ENCODE measurements at regions of chr13 and their contacts with region 1.

Region 1: DNA sequence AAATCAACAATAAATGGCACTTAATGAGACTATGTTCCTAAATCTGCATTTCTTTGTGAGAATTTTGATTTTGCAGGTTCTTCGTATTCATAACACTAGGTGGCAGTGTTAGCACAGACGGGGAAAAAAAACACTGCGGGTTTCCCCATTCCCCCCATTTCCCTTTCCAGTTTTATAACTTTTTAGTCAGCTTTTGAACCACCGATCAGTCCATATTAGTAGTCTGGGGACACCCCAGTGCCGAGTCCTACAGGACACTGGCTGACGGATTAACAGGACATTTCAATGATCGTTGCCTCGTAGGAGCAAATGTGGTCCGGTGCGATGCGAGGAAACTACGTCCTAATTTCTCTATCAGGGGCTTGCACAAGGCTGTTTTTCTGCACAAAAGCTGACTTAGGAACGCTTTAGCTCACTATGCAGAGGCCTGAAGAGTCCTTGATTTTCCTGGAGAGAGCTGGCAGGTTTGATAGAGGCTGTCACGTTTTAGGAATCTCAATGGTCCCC is 234.3 kb downstream of the LMO7 start:
- DNase-seq: no peak
- H3K4me3 ChIP-seq: peak overlapping the region; percentile 11
- H3K27ac ChIP-seq: no peak overlapping the region
- H3K4me1 ChIP-seq: no peaks in the 10 kb centered on the region
- H3K27me3 ChIP-seq: no peaks in the 10 kb centered on the region
- CTCF ChIP-seq: peak; percentile 64

Region 2: DNA sequence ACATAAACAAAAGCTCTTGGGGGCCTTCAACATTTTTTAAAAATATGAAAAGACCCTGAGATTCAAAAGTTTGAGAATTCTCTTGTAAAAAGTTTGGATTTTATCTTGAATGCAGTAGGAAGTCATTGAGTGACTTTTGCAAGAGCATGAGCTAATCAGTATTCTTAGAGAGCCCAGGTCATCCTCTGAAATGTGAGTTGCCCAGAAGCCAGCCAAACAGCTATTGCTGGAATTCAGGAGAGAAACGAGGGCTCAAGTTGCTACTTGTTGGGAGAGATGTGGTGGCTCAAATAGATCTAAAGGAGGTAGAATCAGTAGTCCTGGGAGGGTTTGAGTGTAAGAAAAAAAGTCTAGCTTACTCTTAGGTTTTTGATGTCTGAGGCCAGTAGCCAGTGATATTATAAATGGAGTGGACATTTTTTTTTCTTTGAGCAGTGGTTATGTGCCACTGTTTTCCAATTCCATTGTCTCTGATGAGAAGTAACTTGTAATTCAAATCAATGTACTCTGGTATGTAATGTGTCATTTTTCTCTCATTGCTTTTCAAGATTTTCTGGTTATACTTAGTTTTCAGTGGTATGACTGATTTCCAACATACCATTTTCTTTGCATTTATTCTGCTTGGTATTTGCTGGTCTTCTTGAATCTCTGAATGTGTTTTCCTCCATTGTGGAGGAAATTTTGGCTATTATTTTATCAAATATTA is 203.7 kb before region 1 on chr13:
- intact Hi-C with region 1: no loop called
- DNase-seq: no peak
- H3K4me3 ChIP-seq: no peak overlapping the region
- H3K27ac ChIP-seq: no peak overlapping the region
- H3K4me1 ChIP-seq: no peaks in the 10 kb centered on the region
- H3K27me3 ChIP-seq: no peaks in the 10 kb centered on the region
- CTCF ChIP-seq: no peak

Region 3: GRCh38 chr13:75694722-75695121 is 175.7 kb before region 1 on chr13:
- intact Hi-C with region 1: loop called (anchors 5 kb)
- DNase-seq: no peak
- H3K4me3 ChIP-seq: no peak overlapping the region
- H3K27ac ChIP-seq: no peak overlapping the region
- H3K4me1 ChIP-seq: no peaks in the 10 kb centered on the region
- H3K27me3 ChIP-seq: no peaks in the 10 kb centered on the region
- CTCF ChIP-seq: no peak

Region 4: DNA sequence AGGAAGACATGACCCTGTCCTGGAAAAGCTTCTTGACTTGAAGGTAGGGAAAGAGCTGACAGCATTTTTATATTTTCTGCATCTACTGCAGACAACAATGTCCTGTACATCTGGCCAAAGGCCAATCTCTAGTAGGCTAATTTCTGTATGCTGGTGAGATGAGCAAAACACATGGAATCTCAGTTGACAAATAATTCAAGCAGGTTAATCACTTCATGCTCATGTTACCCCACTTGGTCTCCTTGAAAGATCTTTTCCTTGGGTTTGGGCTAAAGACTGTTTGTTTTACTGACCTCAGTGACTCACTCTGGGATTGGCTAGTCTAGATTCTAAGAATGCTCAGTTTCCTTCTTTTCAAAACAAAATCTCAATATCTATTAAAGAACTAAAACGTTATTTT is 64.4 kb after region 1 on chr13:
- intact Hi-C with region 1: no loop called
- DNase-seq: no peak
- H3K4me3 ChIP-seq: no peak overlapping the region
- H3K27ac ChIP-seq: no peak overlapping the region
- H3K4me1 ChIP-seq: no peaks in the 10 kb centered on the region
- H3K27me3 ChIP-seq: no peaks in the 10 kb centered on the region
- CTCF ChIP-seq: no peak

Region 5: DNA sequence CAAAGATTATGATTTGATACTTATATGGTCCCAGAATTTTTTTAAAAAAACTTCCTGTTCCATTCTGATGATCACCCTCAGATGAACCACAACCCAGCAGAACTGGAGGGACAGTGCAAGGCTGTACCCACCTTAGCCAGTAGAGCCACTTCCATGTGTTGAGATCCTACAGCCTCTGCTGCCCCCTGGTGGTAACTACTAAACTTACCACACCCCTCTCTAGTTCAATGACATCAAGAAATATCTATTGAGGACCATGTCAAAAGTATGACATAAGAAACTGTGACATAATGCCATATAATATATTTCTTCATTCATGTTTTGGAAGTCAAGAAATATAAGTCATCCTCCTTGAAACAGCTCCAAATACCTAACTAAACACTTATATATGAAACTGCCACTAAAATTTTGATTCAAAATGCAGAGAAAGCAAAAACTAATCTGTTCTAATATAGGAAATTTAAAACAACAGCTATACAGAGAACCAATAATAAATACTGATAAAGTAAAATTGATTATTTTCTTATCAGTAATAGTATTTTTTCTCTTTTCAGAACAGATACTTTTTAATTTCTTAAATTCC is 603.2 kb after region 1 on chr13:
- intact Hi-C with region 1: loop called (anchors 5 kb)
- DNase-seq: peak; percentile 75
- H3K4me3 ChIP-seq: no peak overlapping the region
- H3K27ac ChIP-seq: no peak overlapping the region
- H3K4me1 ChIP-seq: no peaks in the 10 kb centered on the region
- H3K27me3 ChIP-seq: no peaks in the 10 kb centered on the region
- CTCF ChIP-seq: peak; percentile 87

Measured in colonic mucosa (tissue), 4 donors.